CD14-positive monocyte (primary cell): ENCODE measurements at regions of chr19 and their contacts with region 1.

Region 1: GRCh38 chr19:9584073-9584833 is at the start of gene ZNF121:
- DNase-seq: peak; percentile 78 to 80 (median 79)
- H3K4me3 ChIP-seq: peak within 1 kb of the TSS; percentile 68 to 95 (median 81)
- H3K4me3 Mint-ChIP-seq: peak within 1 kb of the TSS; percentile 93 to 96
- H3K27ac ChIP-seq: peak within 1 kb of the TSS; percentile 84 to 91
- H3K27ac Mint-ChIP-seq: peak within 1 kb of the TSS; percentile 92 to 98 (median 95)
- H3K4me1 ChIP-seq: peaks cover 10 to 17% of the 10 kb centered on the region in 2 donors
- H3K4me1 Mint-ChIP-seq: peaks cover 16% of the 10 kb centered on the region
- H3K27me3 ChIP-seq: no peaks in the 10 kb centered on the region
- H3K27me3 Mint-ChIP-seq: peaks cover 4 to 11% (median 7%) of the 10 kb centered on the region in 3 donors
- CTCF ChIP-seq: no peak
- polyA plus RNA-seq, gene ZNF121: 1.5 to 7.2 (median 3.8) TPM

Region 2: DNA sequence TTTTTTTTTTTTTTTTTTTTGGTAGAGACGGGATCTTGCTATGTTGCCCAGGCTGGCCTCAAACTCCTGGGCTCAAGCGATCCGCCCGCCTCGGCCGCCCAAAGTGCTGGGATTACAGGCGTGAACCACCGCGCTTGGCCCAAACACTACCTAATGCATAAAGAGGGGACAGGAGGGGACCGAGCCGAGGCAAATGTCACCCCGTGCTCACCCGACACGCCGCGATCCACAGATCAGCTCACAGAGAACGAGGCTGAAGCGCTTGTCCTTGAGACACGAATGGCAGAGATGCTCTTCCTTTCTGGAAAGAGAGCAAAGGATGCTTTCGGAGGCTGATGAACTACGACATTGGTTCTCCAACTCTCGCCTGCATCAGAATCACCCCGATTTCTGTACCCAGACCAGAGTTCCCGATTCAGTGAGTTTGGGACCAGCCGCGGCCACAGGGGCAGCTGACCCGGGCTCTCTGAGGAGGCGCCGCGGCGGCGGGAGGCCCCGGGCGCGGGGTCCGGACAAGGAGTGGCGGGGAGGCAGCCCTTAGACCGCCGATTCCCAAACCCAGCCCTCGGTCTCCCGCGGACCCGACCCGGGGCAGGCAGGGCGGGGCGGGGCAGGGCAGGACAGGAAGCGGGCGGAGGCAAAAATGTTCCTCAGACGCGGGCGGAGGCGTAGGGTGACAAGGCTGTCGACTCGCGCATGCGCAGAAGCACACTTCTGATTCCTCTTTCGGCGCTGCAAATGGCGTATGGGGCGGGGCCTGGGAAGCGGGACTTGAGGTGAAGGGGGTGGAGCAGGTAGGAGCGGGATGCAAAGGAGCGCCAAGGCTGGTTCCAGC is 274.9 kb before region 1 on chr19 and contains the start of gene ZNF699:
- intact Hi-C with region 1: loop called (anchors 5 to 10 kb)
- DNase-seq: peak; percentile 96 to 99 (median 97)
- H3K4me3 ChIP-seq: peak within 1 kb of the TSS; percentile 55 to 93 (median 83)
- H3K4me3 Mint-ChIP-seq: peak within 1 kb of the TSS; percentile 97 to 98
- H3K27ac ChIP-seq: peak within 1 kb of the TSS; percentile 58 to 96
- H3K27ac Mint-ChIP-seq: peak within 1 kb of the TSS; percentile 96 to 99 (median 98)
- H3K4me1 ChIP-seq: peaks cover 13 to 18% of the 10 kb centered on the region in 2 donors
- H3K4me1 Mint-ChIP-seq: peaks cover 19% of the 10 kb centered on the region
- H3K27me3 ChIP-seq: no peaks in the 10 kb centered on the region
- H3K27me3 Mint-ChIP-seq: peaks cover 1 to 4% (median 2%) of the 10 kb centered on the region in 3 donors
- CTCF ChIP-seq: no peak
- polyA plus RNA-seq, gene ZNF699: 3.4 to 18.5 (median 5.6) TPM

Region 3: GRCh38 chr19:9621156-9622037 is 37.1 kb after region 1 on chr19 and contains the start of gene ZNF561:
- intact Hi-C with region 1: loop called (anchors 2 to 5 kb)
- DNase-seq: peak; percentile 83 to 89 (median 87)
- H3K4me3 ChIP-seq: peak within 1 kb of the TSS; percentile 75 to 99 (median 96)
- H3K4me3 Mint-ChIP-seq: peak within 1 kb of the TSS; percentile 99 to 100
- H3K27ac ChIP-seq: peak within 1 kb of the TSS; percentile 93 to 95
- H3K27ac Mint-ChIP-seq: peak within 1 kb of the TSS; percentile 99 to 100 (median 100)
- H3K4me1 ChIP-seq: peaks cover 23 to 25% of the 10 kb centered on the region in 2 donors
- H3K4me1 Mint-ChIP-seq: peaks cover 22% of the 10 kb centered on the region
- H3K27me3 ChIP-seq: no peaks in the 10 kb centered on the region
- H3K27me3 Mint-ChIP-seq: no peaks in the 10 kb centered on the region
- CTCF ChIP-seq: no peak
- polyA plus RNA-seq, gene ZNF561: 11.0 to 14.3 (median 12.5) TPM